Dorsolateral prefrontal cortex (tissue), 120 donors: ENCODE measurements at regions of chr11 and their contacts with region 1.

Region 1: GRCh38 chr11:109320595-109320994 is 101.4 kb upstream of the C11orf87 start:
- DNase-seq: no peak
- H3K4me3 ChIP-seq: no peak overlapping the region
- H3K27ac ChIP-seq: no peak overlapping the region
- H3K27me3 ChIP-seq: no peaks in the 10 kb centered on the region
- CTCF ChIP-seq: no peak

Region 2: GRCh38 chr11:108609681-108610080 is 710.9 kb before region 1 on chr11:
- intact Hi-C with region 1: loop called in 1 of 2 experiments (anchors 5 kb)
- DNase-seq: no peak
- H3K4me3 ChIP-seq: no peak overlapping the region
- H3K27ac ChIP-seq: no peak overlapping the region
- H3K27me3 ChIP-seq: peaks cover 0 to 3% (median 0%) of the 10 kb centered on the region in 45 donors
- CTCF ChIP-seq: no peak